ENCODE measurements at regions of chr17 and their contacts with region 1.

Region 1: GRCh38 chr17:72725433-72726068 is 366.9 kb downstream of the SLC39A11 start:
- DNase-seq: peak; percentile 56
- H3K4me3 ChIP-seq: no peak overlapping the region
- H3K27ac ChIP-seq: no peak overlapping the region
- H3K4me1 ChIP-seq: peaks cover 19% of the 10 kb centered on the region
- H3K27me3 ChIP-seq: no peaks in the 10 kb centered on the region
- CTCF ChIP-seq: peak; percentile 82 to 87

Region 2: GRCh38 chr17:72212041-72212440 is 513.5 kb before region 1 on chr17:
- CTCF ChIA-PET with region 1: no interaction called
- dilution Hi-C with region 1: no loop called
- in situ Hi-C with region 1: no loop called
- intact Hi-C with region 1: no loop called
- DNase-seq: no peak
- H3K4me3 ChIP-seq: no peak overlapping the region
- H3K27ac ChIP-seq: no peak overlapping the region
- H3K4me1 ChIP-seq: no peaks in the 10 kb centered on the region
- H3K27me3 ChIP-seq: peaks cover 6% of the 10 kb centered on the region
- CTCF ChIP-seq: no peak

Region 3: GRCh38 chr17:72592242-72592966 is 133.1 kb before region 1 on chr17:
- CTCF ChIA-PET with region 1: no interaction called
- dilution Hi-C with region 1: no loop called
- in situ Hi-C with region 1: no loop called
- intact Hi-C with region 1: loop called (anchors 1 kb)
- DNase-seq: peak; percentile 81
- H3K4me3 ChIP-seq: peak overlapping the region; percentile 79 to 93 (median 83)
- H3K27ac ChIP-seq: peak overlapping the region; percentile 98
- H3K4me1 ChIP-seq: peaks cover 20% of the 10 kb centered on the region
- H3K27me3 ChIP-seq: no peaks in the 10 kb centered on the region
- CTCF ChIP-seq: no peak

Region 4: GRCh38 chr17:72985881-72986720 is 260.6 kb after region 1 on chr17:
- CTCF ChIA-PET with region 1: no interaction called
- dilution Hi-C with region 1: no loop called
- in situ Hi-C with region 1: no loop called
- intact Hi-C with region 1: loop called (anchors 2 kb)
- DNase-seq: peak; percentile 58
- H3K4me3 ChIP-seq: no peak overlapping the region
- H3K27ac ChIP-seq: no peak overlapping the region
- H3K4me1 ChIP-seq: peaks cover 9% of the 10 kb centered on the region
- H3K27me3 ChIP-seq: no peaks in the 10 kb centered on the region
- CTCF ChIP-seq: peak; percentile 86 to 92

Region 5: GRCh38 chr17:73192894-73193701 is 467.5 kb after region 1 on chr17 and contains the start of gene COG1:
- CTCF ChIA-PET with region 1: interaction called, 10 read pairs
- dilution Hi-C with region 1: no loop called
- in situ Hi-C with region 1: loop called (anchors 5 kb)
- intact Hi-C with region 1: loop called (anchors 1 kb)
- DNase-seq: peak; percentile 86
- H3K4me3 ChIP-seq: peak within 1 kb of the TSS; percentile 73 to 96 (median 80)
- H3K27ac ChIP-seq: peak within 1 kb of the TSS; percentile 57
- H3K4me1 ChIP-seq: peaks cover 4% of the 10 kb centered on the region
- H3K27me3 ChIP-seq: no peaks in the 10 kb centered on the region
- CTCF ChIP-seq: no peak
- total RNA-seq, gene COG1: 23.3 to 35.2 TPM

Region 6: DNA sequence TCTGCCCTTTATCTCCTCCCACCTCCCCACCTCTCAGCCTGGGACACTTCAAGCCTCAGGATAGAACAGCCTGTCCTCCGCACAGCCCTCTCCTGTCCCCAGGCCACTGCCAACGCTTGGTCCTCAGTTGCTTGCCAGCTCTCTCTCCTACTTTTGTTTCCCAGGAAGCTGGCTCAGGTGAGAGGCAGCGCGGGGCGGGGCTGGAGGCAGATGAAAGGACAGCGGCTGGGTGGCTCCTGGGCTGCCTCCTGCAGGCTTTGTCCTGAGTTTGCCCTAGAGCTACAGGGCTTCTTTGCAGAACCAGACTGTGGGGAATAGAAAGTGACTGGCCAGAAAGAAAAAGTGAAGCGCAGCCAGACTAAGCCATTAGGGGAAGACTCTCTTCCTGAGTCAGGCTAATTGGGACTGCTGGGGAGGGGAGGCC is 634.4 kb after region 1 on chr17:
- CTCF ChIA-PET with region 1: no interaction called
- dilution Hi-C with region 1: no loop called
- in situ Hi-C with region 1: loop called in 1 of 2 experiments (anchors 25 kb)
- intact Hi-C with region 1: no loop called
- DNase-seq: peak; percentile 65
- H3K4me3 ChIP-seq: no peak overlapping the region
- H3K27ac ChIP-seq: no peak overlapping the region
- H3K4me1 ChIP-seq: peaks cover 10% of the 10 kb centered on the region
- H3K27me3 ChIP-seq: no peaks in the 10 kb centered on the region
- CTCF ChIP-seq: peak; percentile 14 to 51